ENCODE measurements at regions of chr22 and their contacts with region 1.

Region 1: GRCh38 chr22:38696606-38697424 is 3.9 kb downstream of the JOSD1 start:
- DNase-seq: peak; percentile 83
- H3K4me3 Mint-ChIP-seq: peak overlapping the region; percentile 79
- H3K27ac Mint-ChIP-seq: peak overlapping the region; percentile 81
- H3K4me1 Mint-ChIP-seq: peaks cover 33% of the 10 kb centered on the region
- H3K27me3 Mint-ChIP-seq: no peaks in the 10 kb centered on the region
- CTCF ChIP-seq: no peak

Region 2: DNA sequence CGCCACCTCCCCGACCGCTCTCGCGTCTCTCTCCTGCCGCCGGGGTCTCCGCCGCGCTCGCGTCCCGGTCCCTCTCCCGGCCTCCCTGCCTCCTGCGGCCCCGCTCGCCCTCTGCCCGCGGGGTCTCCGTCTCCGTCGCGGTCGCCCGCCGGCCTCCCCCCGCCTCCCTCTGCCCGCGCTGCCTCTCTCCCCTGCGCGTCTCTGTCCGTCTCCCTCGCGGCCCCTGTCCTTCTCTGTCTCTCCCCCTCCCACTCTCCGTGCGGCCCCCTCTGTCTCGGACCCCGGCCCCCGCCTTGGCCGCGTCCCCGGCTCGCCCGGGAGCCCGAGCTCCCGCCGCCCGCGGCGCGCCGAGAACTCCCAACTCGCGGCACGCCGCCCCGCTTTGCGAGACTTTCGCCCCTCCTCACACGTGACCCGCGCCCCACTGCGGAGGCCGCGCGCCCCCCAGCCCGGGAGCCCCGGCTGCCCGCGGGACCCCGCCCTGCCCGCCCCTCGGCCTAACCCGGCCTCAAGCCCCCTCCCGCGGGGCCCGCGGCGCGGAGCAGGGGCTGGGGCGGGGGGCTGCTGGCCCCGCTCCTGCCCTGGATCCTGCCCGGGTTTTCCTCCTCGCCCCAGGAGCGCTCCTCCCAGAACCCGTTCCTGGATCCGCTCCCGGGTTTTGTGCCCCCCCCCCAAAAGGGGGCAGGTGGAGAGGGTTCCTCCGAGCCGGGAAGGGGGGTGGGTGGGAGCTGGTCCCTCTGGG is 241.1 kb before region 1 on chr22:
- CTCF ChIA-PET with region 1: no interaction called
- POLR2A ChIA-PET with region 1: no interaction called
- intact Hi-C with region 1: no loop called
- DNase-seq: no peak
- H3K4me3 Mint-ChIP-seq: peak overlapping the region; percentile 56
- H3K27ac Mint-ChIP-seq: no peak overlapping the region
- H3K4me1 Mint-ChIP-seq: peaks cover 7% of the 10 kb centered on the region
- H3K27me3 Mint-ChIP-seq: peaks cover 54% of the 10 kb centered on the region
- CTCF ChIP-seq: no peak

Region 3: GRCh38 chr22:38638734-38639133 is 58.1 kb before region 1 on chr22:
- CTCF ChIA-PET with region 1: no interaction called
- POLR2A ChIA-PET with region 1: no interaction called
- intact Hi-C with region 1: no loop called
- DNase-seq: no peak
- H3K4me3 Mint-ChIP-seq: no peak overlapping the region
- H3K27ac Mint-ChIP-seq: no peak overlapping the region
- H3K4me1 Mint-ChIP-seq: no peaks in the 10 kb centered on the region
- H3K27me3 Mint-ChIP-seq: no peaks in the 10 kb centered on the region
- CTCF ChIP-seq: no peak

Region 4: DNA sequence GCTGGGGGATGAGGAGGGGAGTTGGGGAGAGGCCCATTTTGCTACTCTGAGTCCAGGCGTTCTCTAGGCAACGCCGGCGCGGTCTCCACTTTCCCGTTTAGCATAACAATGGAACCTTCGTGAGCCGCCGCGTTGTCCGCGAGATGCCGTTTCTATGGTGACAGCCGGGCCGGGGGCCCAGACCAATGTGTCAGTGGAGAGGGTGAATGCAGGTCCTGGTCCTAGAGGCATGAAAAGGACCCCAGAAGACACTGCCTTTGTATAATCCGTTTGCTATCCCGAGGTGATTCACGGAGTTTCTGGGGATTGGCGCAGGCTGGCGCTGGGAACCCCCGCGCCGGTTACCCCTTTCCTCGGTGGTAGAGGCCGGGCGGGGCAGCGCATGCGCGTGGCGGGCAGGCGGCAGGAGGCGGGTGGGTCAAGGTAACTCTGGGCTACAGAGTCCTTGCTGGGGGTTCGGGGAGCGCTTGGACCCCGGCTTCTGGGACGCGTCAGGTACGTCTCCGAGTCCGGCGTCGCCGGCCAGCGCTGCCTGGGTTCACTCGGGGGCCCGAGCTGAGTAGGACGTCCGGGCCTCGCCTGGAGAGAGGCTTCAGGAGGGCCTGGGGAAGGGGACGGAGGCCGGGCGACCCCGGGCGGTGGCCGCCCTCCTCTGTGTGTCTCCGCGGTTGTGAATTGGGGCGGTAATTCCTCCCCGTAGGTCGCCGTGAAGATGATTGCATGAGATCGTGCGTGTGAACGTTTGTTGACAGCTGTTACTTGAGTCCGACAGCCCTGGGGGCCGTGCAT is 40.4 kb before region 1 on chr22 and contains the starts of genes CBY1 and FAM227A:
- CTCF ChIA-PET with region 1: interaction called, 3 read pairs
- POLR2A ChIA-PET with region 1: interaction called, 21 read pairs
- intact Hi-C with region 1: no loop called
- DNase-seq: peak; percentile 89
- H3K4me3 Mint-ChIP-seq: peak within 1 kb of the TSS; percentile 93
- H3K27ac Mint-ChIP-seq: peak within 1 kb of the TSS; percentile 100
- H3K4me1 Mint-ChIP-seq: no peaks in the 10 kb centered on the region
- H3K27me3 Mint-ChIP-seq: no peaks in the 10 kb centered on the region
- CTCF ChIP-seq: no peak
- total RNA-seq, gene CBY1: 40.6 and 42.1 TPM in 2 replicates
- total RNA-seq, gene FAM227A: 2.3 and 2.6 TPM in 2 replicates

Region 5: GRCh38 chr22:38681784-38682335 is 15.0 kb before region 1 on chr22 and contains the start of gene TOMM22:
- CTCF ChIA-PET with region 1: interaction called, 40 read pairs
- POLR2A ChIA-PET with region 1: interaction called, 223 read pairs
- intact Hi-C with region 1: no loop called
- DNase-seq: peak; percentile 83
- H3K4me3 Mint-ChIP-seq: peak within 1 kb of the TSS; percentile 92
- H3K27ac Mint-ChIP-seq: peak within 1 kb of the TSS; percentile 99
- H3K4me1 Mint-ChIP-seq: peaks cover 5% of the 10 kb centered on the region
- H3K27me3 Mint-ChIP-seq: no peaks in the 10 kb centered on the region
- CTCF ChIP-seq: peak; percentile 39
- total RNA-seq, gene TOMM22: 60.4 and 71.5 TPM in 2 replicates

Region 6: GRCh38 chr22:38755911-38756532 is 59.2 kb after region 1 on chr22 and contains the start of gene SUN2:
- CTCF ChIA-PET with region 1: no interaction called
- POLR2A ChIA-PET with region 1: interaction called, 12 read pairs
- intact Hi-C with region 1: no loop called
- DNase-seq: peak; percentile 84
- H3K4me3 Mint-ChIP-seq: peak within 1 kb of the TSS; percentile 81
- H3K27ac Mint-ChIP-seq: peak within 1 kb of the TSS; percentile 82
- H3K4me1 Mint-ChIP-seq: peaks cover 19% of the 10 kb centered on the region
- H3K27me3 Mint-ChIP-seq: no peaks in the 10 kb centered on the region
- CTCF ChIP-seq: no peak
- total RNA-seq, gene SUN2: 51.9 and 66.8 TPM in 2 replicates

Measured in MCF 10A (cell line).